A673 (cell line): ENCODE measurements at regions of chr1 and their contacts with region 1.

Region 1: GRCh38 chr1:204446370-204447111 is 34.9 kb upstream of the PPP1R15B start:
- DNase-seq: peak; percentile 87
- H3K4me3 ChIP-seq: no peak overlapping the region
- H3K27ac ChIP-seq: no peak overlapping the region
- H3K4me1 ChIP-seq: peaks cover 20% of the 10 kb centered on the region
- H3K27me3 ChIP-seq: no peaks in the 10 kb centered on the region
- CTCF ChIP-seq: peak; percentile 70

Region 2: DNA sequence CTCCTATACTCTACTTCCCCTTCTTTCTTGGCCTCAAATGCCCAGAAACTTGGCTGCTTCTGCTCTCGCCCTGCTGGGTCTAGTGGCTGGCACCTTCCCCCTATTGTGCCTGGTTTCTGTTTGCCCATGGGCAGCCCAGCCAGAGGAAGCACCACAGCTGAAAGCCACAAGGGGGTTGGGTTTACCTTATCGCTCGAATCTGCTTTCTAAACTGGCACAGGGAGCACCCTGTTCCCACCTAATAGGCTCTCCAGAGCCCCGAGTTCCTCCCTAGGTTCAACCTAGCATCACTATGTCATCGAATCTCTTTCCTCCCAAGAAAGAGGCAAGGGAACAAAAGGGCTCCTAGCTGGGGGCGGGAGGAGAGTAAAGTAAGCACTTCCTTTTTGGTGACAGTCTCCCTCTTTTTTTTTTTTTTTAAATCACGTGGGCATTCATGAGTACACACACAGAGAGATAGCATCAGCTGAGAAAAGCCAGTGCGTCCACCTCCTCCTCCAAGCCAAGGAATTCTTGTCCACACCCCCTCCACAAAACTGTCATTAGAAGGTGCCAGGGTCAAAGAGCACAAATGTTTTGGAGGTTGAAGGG is 159.6 kb before region 1 on chr1:
- CTCF ChIA-PET with region 1: no interaction called
- POLR2A ChIA-PET with region 1: no interaction called
- intact Hi-C with region 1: no loop called
- DNase-seq: peak; percentile 54
- H3K4me3 ChIP-seq: no peak overlapping the region
- H3K27ac ChIP-seq: no peak overlapping the region
- H3K4me1 ChIP-seq: peaks cover 17% of the 10 kb centered on the region
- H3K27me3 ChIP-seq: peaks cover 8% of the 10 kb centered on the region
- CTCF ChIP-seq: no peak

Region 3: GRCh38 chr1:204494281-204495077 is 47.9 kb after region 1 on chr1 and contains the start of gene PIK3C2B:
- CTCF ChIA-PET with region 1: interaction called, 71 read pairs
- POLR2A ChIA-PET with region 1: no interaction called
- intact Hi-C with region 1: loop called (anchors 2 kb)
- DNase-seq: peak; percentile 85
- H3K4me3 ChIP-seq: peak within 1 kb of the TSS; percentile 94
- H3K27ac ChIP-seq: peak within 1 kb of the TSS; percentile 83
- H3K4me1 ChIP-seq: peaks cover 21% of the 10 kb centered on the region
- H3K27me3 ChIP-seq: no peaks in the 10 kb centered on the region
- CTCF ChIP-seq: no peak
- total RNA-seq, gene PIK3C2B: 18.0 and 25.5 TPM in 2 replicates

Region 4: DNA sequence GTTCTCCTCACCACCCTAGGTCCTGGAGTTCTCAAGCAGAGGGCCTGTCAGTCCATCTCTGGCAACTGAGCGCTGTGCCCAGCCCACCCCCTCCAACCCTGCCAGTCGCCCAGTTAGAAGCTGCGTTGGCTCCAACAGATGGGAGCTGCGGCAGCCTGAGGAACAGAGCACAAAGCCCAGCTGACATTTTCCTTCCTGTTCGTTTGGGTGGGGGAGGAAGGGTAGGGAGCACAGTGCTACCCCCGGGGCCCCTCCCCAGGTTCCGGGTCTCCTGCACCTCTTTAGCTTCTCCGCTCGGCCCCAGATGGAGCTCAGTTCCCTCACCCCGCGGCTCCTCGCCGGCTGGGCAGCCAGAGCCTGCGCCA is 237.6 kb after region 1 on chr1:
- CTCF ChIA-PET with region 1: no interaction called
- POLR2A ChIA-PET with region 1: interaction called, 11 read pairs
- intact Hi-C with region 1: no loop called
- DNase-seq: no peak
- H3K4me3 ChIP-seq: no peak overlapping the region
- H3K27ac ChIP-seq: no peak overlapping the region
- H3K4me1 ChIP-seq: no peaks in the 10 kb centered on the region
- H3K27me3 ChIP-seq: peaks cover 56% of the 10 kb centered on the region
- CTCF ChIP-seq: no peak

Region 5: DNA sequence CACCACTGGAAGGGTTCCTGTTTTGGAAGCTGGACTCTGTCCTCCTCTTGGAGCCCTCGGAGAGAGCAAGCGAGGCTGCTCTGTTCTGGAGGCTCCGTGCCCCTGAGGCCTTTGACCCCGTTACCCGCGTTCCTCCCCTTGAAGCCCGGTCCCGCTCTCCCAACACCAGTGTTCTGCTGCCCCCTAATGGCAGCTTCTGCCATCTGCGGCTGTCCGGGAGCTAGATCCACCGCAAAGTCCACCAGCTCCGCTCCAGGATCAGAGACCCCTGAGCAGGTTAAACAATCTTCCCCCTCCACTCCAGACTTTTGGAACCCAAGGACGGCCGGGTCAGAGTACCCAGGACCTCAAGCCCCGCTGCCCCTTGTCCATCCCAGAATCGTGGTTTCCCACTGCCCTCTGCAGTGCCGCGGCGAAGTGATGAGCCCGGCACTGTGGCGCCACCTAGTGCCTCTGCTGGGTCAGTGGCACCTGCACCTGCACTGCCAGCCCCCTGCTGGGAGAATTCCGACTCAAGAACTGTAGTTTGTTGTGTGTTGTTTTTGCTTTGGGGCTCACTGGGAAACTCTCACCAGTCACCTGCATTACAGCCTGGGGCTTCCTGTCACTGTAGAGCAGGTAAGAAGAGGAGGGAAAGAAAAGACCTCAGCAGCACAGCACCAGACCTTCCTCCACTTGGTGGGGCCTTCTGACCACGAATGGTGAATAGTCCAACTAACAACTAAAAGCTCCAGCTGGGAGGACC is 360.6 kb after region 1 on chr1:
- CTCF ChIA-PET with region 1: no interaction called
- POLR2A ChIA-PET with region 1: no interaction called
- intact Hi-C with region 1: loop called (anchors 10 kb)
- DNase-seq: peak; percentile 86
- H3K4me3 ChIP-seq: peak overlapping the region; percentile 48
- H3K27ac ChIP-seq: no peak overlapping the region
- H3K4me1 ChIP-seq: no peaks in the 10 kb centered on the region
- H3K27me3 ChIP-seq: peaks cover 12% of the 10 kb centered on the region
- CTCF ChIP-seq: peak; percentile 100; the same call in 1 of the 2 replicates